ENCODE measurements at regions of chr1 and their contacts with region 1.

Region 1: DNA sequence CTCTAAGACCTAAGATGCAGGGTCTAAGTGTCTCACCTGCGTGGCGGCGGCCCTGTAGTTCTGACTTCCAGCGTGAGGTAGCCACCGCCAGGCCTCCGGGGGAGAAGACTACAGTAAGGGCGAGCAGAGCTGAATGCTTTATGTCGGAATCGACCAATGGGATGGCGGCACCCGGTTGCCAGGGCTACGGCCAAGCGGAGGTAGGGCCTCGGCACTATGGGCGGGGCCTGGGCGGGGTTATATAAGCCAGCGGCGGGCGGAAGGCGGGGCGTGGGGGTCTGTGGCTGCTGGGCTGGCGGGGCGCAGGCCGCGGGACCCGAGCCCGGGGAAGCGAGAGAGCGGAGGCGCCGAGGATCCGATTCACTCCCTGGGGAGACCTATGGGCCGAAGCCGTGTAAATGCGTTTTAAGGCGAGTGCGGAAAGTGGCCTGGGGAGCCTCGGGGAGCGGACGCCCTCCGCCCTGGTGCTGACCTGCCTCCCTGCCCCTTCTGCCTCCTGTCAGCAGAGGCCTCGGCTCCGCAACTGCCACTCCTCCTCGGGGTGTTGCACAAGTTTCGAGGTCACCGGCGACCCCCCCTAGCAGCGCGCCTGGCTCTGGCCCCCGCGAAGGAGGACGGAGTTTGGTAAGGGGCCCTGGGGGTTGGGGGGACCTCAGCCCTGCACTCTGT is at the start of gene AZIN2:
- H3K4me3 Mint-ChIP-seq: peak within 1 kb of the TSS; percentile 74
- H3K27ac Mint-ChIP-seq: peak within 1 kb of the TSS; percentile 50
- H3K4me1 Mint-ChIP-seq: peaks cover 27% of the 10 kb centered on the region
- H3K27me3 Mint-ChIP-seq: peaks cover 58% of the 10 kb centered on the region

Region 2: DNA sequence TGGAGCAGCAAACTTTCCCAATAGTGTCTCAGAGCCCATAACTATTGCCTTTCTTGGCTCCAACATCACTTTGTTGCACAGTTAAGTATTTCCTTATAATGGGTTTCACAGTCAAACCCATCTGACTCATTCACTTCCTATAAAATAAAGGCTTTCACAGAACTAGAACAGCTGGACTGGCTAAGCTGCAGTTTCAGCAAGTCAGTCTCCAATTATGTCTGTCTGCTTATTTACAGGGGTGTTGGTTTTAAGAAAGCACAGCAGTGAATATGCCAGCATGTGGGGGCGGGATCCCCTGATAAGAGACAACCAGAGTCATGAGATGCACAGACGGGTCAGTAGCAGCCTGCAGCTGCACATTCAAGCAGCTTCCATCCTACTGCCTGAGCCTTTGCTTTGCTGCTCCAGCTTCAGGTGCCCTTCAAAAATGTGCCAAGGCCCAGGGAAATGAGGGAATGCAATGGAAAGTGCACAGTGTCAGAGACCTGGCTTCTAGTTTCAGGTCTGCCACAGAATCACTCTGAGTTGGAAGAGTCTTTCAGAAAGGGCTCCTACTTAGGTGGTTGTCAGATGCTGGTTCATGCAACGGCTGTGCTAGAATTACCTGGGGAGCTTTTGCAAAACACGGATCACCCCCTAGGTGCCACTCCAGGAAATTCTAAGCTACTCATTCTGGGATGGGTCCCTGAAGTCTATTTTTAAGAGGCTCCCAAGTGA is 141.2 kb before region 1 on chr1:
- intact Hi-C with region 1: loop called (anchors 10 kb)
- H3K4me3 Mint-ChIP-seq: peak overlapping the region; percentile 46
- H3K27ac Mint-ChIP-seq: peak overlapping the region; percentile 70
- H3K4me1 Mint-ChIP-seq: peaks cover 82% of the 10 kb centered on the region
- H3K27me3 Mint-ChIP-seq: no peaks in the 10 kb centered on the region

Region 3: DNA sequence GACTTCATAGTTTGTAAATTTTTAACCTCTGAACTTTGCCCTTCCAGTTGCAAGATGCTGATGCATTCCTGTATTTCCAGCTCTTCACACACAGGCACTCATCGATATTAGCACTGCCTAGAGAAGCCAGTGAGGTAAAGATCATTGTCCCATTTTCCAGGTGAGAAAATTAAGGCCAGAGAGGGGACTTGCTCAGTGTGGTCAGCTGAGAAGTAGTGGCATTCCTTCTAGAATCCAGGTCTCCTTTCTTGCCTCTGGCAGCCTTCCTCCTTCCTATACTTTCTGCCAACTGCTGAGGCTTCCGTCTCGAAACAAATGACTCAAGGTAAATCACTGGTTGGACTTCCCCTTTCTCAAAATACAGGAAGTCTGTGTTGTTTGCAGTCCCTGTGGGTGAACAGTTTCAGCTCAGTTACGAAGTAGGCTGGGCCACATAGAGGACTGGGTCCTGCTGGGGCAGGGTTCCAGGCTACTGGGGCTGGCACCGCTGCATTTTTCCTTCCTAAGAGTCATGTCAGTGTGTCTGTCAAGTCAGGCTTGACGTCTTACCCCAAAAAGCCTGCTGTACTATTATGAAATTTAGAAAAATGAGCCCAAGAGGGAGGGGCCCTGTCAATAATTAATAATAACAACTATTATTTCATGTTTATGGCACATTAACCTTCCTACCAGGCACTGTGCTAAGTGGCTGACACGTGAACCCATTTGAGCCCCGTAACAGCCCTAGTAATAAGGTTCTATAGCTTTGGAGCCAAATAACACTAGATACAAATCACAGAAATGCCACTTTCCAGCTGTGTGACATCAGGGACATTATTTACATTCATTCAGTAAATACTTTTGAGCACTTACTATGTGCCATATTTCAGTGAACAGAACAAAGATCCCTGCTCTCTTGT is 99.8 kb before region 1 on chr1:
- intact Hi-C with region 1: no loop called
- H3K4me3 Mint-ChIP-seq: peak overlapping the region; percentile 41
- H3K27ac Mint-ChIP-seq: peak overlapping the region; percentile 99
- H3K4me1 Mint-ChIP-seq: peaks cover 93% of the 10 kb centered on the region
- H3K27me3 Mint-ChIP-seq: no peaks in the 10 kb centered on the region